ENCODE measurements at regions of chr1 and their contacts with region 1.

Region 1: DNA sequence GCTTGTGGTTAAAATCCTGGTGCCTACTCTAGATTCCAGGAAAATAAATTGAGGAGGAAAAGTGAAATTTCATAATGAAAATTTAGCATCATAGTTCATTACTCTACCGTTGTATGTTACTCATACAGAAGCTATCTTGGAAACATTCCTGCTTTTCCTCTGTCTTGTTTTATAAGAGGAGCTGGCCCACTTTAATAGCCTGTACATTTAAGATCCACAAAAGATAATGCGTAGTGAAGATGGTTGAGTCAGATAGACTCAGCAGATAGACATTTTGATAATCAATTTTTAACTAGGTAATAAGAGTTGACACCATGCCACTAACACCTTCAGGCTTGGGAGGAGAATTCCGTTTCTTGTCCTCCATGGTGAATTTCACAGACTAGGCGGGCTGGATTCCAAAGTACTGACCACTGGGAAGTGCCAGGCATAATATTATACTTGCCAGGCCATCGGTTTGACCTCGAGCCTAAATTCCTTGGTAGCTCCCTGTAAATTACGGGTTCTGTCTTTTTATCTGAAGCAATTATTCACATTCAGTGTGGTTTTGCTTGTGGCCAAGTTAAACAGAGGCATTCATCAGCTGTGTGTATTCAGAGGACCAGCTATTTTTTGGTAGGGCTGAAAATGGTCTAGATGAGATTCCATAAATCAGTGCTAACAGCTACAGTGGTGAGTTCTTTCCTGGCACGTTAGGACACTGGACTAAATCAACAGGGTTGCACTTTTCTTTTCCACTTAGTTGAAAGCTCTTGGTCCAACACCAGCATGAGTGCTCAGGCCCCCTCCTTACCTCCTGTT is 111.9 kb upstream of the KAZN start:
- DNase-seq: peak; percentile 99
- ATAC-seq: peak; percentile 86
- H3K4me3 ChIP-seq: peak overlapping the region; percentile 9; the same call in 1 of the 2 replicates
- H3K27ac ChIP-seq: peak overlapping the region; percentile 89
- H3K4me1 ChIP-seq: peaks cover 33% of the 10 kb centered on the region
- H3K27me3 ChIP-seq: no peaks in the 10 kb centered on the region
- CTCF ChIP-seq: no peak

Region 2: GRCh38 chr1:14113841-14114567 is 372.6 kb before region 1 on chr1:
- CTCF ChIA-PET with region 1: interaction called, 7 read pairs
- POLR2A ChIA-PET with region 1: no interaction called
- intact Hi-C with region 1: loop called (anchors 5 kb)
- DNase-seq: peak; percentile 73
- ATAC-seq: peak; percentile 91
- H3K4me3 ChIP-seq: no peak overlapping the region
- H3K27ac ChIP-seq: peak overlapping the region; percentile 35; the same call in 1 of the 2 replicates
- H3K4me1 ChIP-seq: peaks cover 20% of the 10 kb centered on the region
- H3K27me3 ChIP-seq: no peaks in the 10 kb centered on the region
- CTCF ChIP-seq: peak; percentile 86

Region 3: DNA sequence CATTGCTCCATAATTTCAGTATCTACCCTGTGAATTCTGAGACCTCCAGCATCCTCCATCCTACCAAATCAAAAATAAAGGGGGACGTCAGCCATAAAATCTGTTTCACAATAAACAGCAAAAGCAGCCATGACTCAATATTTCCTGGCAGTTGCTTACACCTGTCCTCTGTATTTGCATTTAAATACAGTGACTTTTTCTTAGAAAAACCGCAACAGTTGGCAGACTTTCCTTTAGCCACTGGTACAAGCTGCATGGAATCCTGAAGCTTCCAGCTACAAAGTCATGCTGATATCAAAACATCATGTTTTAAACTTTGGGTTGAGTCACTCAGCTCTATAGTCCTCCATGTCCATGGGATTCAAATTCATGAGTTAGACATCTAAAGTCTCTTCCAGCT is 166.1 kb before region 1 on chr1:
- CTCF ChIA-PET with region 1: no interaction called
- POLR2A ChIA-PET with region 1: no interaction called
- intact Hi-C with region 1: loop called (anchors 1 kb)
- DNase-seq: peak; percentile 95
- ATAC-seq: peak; percentile 85
- H3K4me3 ChIP-seq: no peak overlapping the region
- H3K27ac ChIP-seq: peak overlapping the region; percentile 35
- H3K4me1 ChIP-seq: peaks cover 28% of the 10 kb centered on the region
- H3K27me3 ChIP-seq: no peaks in the 10 kb centered on the region
- CTCF ChIP-seq: no peak

Region 4: GRCh38 chr1:14441302-14441741 is 45.3 kb before region 1 on chr1:
- CTCF ChIA-PET with region 1: no interaction called
- POLR2A ChIA-PET with region 1: no interaction called
- intact Hi-C with region 1: loop called (anchors 1 kb)
- DNase-seq: peak; percentile 98
- ATAC-seq: peak; percentile 91
- H3K4me3 ChIP-seq: no peak overlapping the region
- H3K27ac ChIP-seq: peak overlapping the region; percentile 99
- H3K4me1 ChIP-seq: peaks cover 47% of the 10 kb centered on the region
- H3K27me3 ChIP-seq: no peaks in the 10 kb centered on the region
- CTCF ChIP-seq: no peak

Region 5: GRCh38 chr1:14516974-14517840 is 30.6 kb after region 1 on chr1:
- CTCF ChIA-PET with region 1: no interaction called
- POLR2A ChIA-PET with region 1: no interaction called
- intact Hi-C with region 1: loop called (anchors 1 kb)
- DNase-seq: peak; percentile 96
- ATAC-seq: peak; percentile 90
- H3K4me3 ChIP-seq: 0 out of 2 replicates have a peak overlapping the region, but pooled peaks have one; percentile 9
- H3K27ac ChIP-seq: peak overlapping the region; percentile 99
- H3K4me1 ChIP-seq: peaks cover 48% of the 10 kb centered on the region
- H3K27me3 ChIP-seq: no peaks in the 10 kb centered on the region
- CTCF ChIP-seq: no peak

Region 6: DNA sequence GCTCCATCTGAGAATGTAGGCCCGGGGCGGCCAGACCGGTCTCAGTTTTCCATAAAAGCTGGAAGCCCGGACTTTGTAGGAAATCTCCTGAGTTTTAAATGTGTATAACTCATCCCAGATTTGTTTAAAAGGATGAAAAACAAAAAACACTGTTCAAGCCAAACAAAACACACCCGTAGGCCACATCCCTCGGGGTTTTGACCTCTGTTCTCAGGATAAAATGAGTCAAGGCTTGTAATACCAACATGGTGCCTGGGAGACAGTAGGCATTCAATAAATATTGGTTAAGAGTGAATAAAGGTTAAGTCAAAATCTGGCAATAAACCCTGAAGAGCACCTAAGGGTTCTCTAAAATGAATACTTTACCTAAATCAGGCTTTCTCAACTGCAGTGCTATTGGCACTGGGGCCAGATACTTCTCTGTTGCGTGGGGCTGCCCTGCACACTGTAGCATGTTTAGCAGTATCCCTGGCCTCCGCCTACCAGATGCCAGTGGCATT is 166.9 kb after region 1 on chr1:
- CTCF ChIA-PET with region 1: no interaction called
- POLR2A ChIA-PET with region 1: no interaction called
- intact Hi-C with region 1: loop called (anchors 5 kb)
- DNase-seq: peak; percentile 85
- ATAC-seq: peak; percentile 43
- H3K4me3 ChIP-seq: no peak overlapping the region
- H3K27ac ChIP-seq: peak overlapping the region; percentile 83
- H3K4me1 ChIP-seq: peaks cover 45% of the 10 kb centered on the region
- H3K27me3 ChIP-seq: no peaks in the 10 kb centered on the region
- CTCF ChIP-seq: no peak